ENCODE measurements at regions of chr11 and their contacts with region 1.

Region 1: GRCh38 chr11:115194802-115195110 is 309.5 kb downstream of the CADM1 start:
- DNase-seq: no peak
- ATAC-seq: peak in 3 of 4 donors; percentile 36 to 65 (median 38)
- H3K4me3 ChIP-seq: peak overlapping the region in 4 of 12 donors; percentile 7 to 37 (median 22)
- H3K27ac ChIP-seq: peak overlapping the region in 2 of 12 donors; percentile 35 to 44
- H3K4me1 ChIP-seq: peaks cover 0 to 12% (median 0%) of the 10 kb centered on the region in 12 donors
- H3K27me3 ChIP-seq: no peaks in the 10 kb centered on the region
- CTCF ChIP-seq: no peak
- POLR2A ChIP-seq: no peak

Region 2: DNA sequence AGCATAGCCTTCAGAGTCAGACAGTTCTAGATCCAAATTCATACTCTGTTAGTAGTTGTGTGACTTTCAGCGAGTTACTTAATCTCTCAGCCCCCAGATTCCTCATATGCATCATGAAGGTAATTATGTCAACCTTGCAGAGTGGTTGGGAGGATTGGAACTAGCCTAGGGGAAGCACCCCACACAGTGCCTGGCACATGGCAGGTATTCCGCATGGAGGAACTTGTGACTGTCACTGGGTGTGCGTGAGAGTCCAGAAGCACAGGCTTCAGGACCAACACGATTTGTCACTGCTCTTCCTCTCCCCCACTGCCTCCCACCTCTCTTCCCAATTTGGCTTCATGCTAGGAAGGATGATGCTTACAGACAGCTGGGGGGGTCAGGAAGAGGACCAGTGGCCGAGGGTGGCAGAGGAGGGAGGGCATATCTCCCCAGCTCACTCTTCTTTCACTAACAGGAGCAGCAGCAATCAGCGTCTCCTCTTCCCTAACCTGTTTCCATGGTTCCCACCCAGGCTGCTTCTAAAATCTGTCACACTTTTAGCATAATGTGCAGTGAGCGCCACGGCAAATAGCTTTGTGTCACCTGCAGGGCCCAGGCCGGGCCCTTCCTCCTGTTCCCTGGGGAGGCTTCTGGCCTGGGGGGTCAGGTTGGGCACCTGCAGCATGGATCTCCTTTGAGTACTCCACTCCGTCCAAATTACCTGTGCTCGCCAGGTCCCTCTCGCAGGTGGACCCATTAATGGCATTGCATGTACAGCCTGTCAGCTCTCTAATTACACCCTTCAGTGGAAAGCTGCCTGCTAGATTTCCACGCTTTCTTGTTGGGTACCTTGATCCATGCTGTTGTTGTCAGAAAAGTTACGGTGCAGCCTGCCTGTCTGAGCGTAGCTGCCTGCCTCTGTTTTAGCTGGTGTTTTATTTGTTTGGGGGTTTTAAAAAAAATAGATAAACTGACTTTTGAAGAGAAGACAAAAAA is 116.0 kb before region 1 on chr11:
- intact Hi-C with region 1: no loop called
- DNase-seq: no peak
- ATAC-seq: no peak
- H3K4me3 ChIP-seq: no peak overlapping the region
- H3K27ac ChIP-seq: no peak overlapping the region
- H3K4me1 ChIP-seq: no peaks in the 10 kb centered on the region
- H3K27me3 ChIP-seq: peaks cover 0 to 10% (median 0%) of the 10 kb centered on the region in 9 donors
- CTCF ChIP-seq: no peak
- POLR2A ChIP-seq: no peak

Region 3: DNA sequence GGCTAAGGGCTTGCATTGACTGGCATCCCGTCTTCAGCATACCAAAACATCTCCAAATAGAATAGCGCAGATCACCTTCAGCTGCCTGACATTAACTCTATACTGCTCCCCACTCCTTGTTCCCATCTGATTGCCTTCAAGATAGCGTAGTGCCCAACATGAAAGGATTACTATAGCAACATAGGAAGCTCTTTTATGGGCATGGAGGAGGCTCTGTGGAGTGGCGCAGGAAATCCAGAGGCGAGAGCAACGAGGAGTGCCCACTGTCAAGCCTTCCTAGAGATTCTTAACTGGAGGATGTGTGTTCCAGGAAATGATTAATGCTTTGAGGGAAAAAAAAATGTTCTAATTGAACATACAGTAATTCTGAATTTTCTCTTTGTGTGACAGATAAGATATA is 96.1 kb after region 1 on chr11:
- intact Hi-C with region 1: loop called in 1 of 10 experiments (anchors 5 kb)
- DNase-seq: no peak
- ATAC-seq: peak in 2 of 4 donors; percentile 11 to 46
- H3K4me3 ChIP-seq: no peak overlapping the region
- H3K27ac ChIP-seq: peak overlapping the region in 1 of 12 donors; percentile 28
- H3K4me1 ChIP-seq: peaks cover 0 to 20% (median 7%) of the 10 kb centered on the region in 12 donors
- H3K27me3 ChIP-seq: no peaks in the 10 kb centered on the region
- CTCF ChIP-seq: no peak
- POLR2A ChIP-seq: no peak

Measured in heart left ventricle (tissue), 16 donors.